Activated CD4-positive, alpha-beta T cell treated with anti-CD3 and anti-CD28 coated beads, Interleukin-2, amount 10 ng/mL, durations not matched to agents 24 days and 14 days (primary cell): ENCODE measurements at regions of chr7 and their contacts with region 1.

Region 1: DNA sequence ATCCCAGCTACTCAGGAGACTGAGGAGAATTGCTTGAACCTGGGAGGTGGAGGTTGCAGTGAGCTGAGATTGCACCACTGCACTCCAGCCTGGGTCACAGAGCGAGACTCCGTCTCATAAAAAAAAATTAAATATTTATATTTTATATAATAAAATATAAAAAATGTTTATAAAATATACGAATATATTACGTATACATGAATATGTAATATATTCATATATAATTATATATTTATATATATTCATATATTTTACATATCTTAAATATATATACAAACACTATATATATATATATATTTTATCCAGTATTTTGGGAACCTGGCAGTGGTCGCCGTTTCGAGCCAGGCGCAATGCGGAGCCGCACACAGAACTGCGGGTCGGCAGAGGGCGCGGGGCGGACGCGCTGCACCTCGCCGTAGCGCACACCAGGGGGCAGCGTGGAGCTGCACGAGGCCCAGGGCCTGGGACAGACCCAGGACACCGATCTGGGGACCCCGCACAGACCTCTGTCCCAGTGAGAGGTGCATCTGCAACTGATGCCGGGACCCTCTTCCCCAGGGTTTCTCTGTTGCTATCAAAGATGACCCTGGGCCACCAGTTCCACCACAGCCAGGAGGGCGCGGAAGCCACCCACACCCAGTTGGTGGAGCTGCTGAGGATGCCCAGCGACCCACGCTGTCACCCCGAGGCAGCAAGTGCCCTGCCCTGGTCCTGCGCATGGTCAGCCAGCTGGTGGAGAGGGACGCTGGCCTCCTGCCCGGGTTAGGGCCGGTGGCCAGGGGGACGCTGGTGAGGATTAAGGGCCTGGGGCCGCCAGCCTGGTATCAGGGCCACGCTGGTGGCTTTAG is 22.7 kb downstream of the AP5Z1 start:
- DNase-seq: peak; percentile 91
- H3K4me3 Mint-ChIP-seq: no peak overlapping the region
- H3K27ac Mint-ChIP-seq: no peak overlapping the region
- H3K4me1 Mint-ChIP-seq: no peaks in the 10 kb centered on the region
- H3K27me3 Mint-ChIP-seq: no peaks in the 10 kb centered on the region

Region 2: DNA sequence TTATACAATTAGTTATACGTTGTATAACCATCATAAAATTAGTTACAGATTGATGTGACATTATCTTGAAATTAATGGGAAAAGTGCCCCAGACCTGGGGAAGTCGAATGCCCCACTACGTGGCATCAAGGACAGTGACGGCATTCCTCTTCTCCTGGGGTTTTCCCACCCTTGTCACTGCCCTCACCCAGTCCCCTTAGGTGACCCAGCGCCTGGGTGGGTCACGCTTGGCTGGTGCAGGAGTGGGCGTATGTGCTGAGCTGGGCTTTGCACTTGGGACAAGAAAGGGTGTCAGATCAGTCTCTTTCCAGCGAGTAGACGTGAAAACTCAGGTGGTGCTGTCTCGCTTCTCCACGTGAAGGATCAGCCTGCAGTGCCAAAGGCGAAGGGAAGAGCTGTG is 108.4 kb before region 1 on chr7:
- intact Hi-C with region 1: no loop called
- DNase-seq: no peak
- H3K4me3 Mint-ChIP-seq: no peak overlapping the region
- H3K27ac Mint-ChIP-seq: no peak overlapping the region
- H3K4me1 Mint-ChIP-seq: peaks cover 35% of the 10 kb centered on the region
- H3K27me3 Mint-ChIP-seq: no peaks in the 10 kb centered on the region

Region 3: DNA sequence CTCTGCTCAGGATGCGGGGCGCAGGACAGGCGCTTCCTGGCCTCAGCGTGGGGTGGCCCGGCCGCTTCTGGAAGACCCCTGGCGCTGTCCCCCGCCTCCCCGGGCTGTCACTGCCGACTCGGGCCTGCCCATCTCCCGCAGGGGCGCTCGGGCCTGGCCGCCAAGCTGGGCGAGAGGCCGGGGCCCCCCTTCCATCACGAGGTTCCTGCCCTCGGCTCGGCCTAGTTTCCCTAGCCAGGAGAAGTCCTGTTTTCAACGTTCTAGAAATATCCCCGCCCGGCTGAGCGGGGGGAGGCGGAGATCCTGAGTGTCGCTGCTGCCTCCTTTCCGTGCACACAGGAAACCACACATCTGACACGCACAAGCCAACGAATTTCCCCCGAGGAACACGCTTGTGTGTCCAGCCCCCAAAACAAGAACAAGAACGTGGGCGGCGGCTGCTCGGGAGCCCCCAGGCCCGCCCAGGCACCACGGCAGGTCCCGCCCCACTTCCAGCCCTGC is 11.1 kb after region 1 on chr7:
- intact Hi-C with region 1: no loop called
- DNase-seq: peak; percentile 73
- H3K4me3 Mint-ChIP-seq: peak overlapping the region; percentile 76
- H3K27ac Mint-ChIP-seq: no peak overlapping the region
- H3K4me1 Mint-ChIP-seq: no peaks in the 10 kb centered on the region
- H3K27me3 Mint-ChIP-seq: peaks cover 40% of the 10 kb centered on the region

Region 4: GRCh38 chr7:4871056-4871680 is 73.1 kb after region 1 on chr7:
- intact Hi-C with region 1: no loop called
- DNase-seq: no peak
- H3K4me3 Mint-ChIP-seq: no peak overlapping the region
- H3K27ac Mint-ChIP-seq: no peak overlapping the region
- H3K4me1 Mint-ChIP-seq: peaks cover 4% of the 10 kb centered on the region
- H3K27me3 Mint-ChIP-seq: peaks cover 21% of the 10 kb centered on the region

Region 5: DNA sequence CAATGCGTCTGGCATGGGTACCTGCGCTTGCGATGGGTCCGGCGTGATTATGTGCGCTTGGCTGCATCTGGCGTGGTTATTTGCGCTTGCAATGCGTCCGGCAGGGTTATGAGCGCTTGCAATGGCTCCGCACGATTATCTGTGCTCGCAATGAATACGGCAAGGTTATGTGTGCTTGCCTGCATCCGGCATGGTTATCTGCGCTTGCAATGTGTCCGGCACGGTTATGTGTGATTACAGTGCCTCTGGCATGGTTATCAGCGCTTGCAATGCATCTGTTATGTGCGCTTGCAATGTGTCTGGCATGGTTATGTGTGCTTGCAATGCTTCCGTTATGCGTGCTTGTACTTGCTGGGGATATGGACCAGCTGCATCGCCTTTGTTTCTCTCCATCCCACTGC is 285.2 kb after region 1 on chr7:
- intact Hi-C with region 1: loop called (anchors 1 kb)
- DNase-seq: no peak
- H3K4me3 Mint-ChIP-seq: no peak overlapping the region
- H3K27ac Mint-ChIP-seq: no peak overlapping the region
- H3K4me1 Mint-ChIP-seq: no peaks in the 10 kb centered on the region
- H3K27me3 Mint-ChIP-seq: peaks cover 7% of the 10 kb centered on the region